AG04450 (cell line): ENCODE measurements at regions of chr14 and their contacts with region 1.

Region 1: DNA sequence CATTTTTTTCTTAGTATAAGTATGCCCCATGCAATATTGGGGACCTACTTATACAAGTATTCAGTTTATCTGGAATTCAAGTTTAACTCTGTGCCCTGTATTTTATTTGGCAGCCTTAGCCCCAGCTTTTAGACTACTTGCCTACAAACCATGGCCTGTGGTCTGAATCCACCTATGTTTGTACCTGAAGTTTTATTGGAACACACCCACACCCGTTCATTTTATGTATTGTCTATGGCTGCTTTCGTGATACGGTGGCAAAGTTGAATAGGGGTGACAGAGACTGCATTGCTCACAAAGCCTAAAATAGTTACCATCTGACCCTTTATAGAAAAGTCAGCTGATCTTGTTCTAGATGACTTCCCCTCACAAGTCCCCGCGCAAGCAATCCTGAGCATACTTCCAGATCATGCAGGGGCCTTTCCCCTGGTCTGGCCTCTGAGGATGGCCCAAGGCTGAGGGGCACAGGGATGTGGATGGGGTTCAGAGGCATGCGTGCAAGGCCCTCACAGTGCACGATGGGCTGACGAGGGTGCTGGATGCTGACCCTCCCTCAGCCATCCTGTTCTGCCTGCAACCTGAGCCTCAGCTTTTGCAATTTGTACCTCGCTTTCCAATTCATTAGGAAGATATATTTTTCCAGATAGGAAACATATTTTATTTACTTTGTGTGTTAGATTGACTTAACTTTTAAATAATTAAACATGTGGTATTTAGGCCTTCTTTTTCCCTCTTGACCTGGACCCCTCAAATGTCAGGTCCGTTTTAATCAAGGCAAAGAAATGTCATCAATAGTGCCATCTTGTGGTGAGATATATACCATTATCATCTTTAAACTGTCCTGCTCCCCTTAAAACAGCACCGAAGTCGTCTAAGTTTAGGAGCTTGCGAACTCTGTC is 527.3 kb upstream of the CCDC196 start:
- DNase-seq: no peak
- H3K4me3 ChIP-seq: no peak overlapping the region
- H3K27ac ChIP-seq: no peak overlapping the region
- H3K27me3 ChIP-seq: no peaks in the 10 kb centered on the region
- CTCF ChIP-seq: peak; percentile 41

Region 2: DNA sequence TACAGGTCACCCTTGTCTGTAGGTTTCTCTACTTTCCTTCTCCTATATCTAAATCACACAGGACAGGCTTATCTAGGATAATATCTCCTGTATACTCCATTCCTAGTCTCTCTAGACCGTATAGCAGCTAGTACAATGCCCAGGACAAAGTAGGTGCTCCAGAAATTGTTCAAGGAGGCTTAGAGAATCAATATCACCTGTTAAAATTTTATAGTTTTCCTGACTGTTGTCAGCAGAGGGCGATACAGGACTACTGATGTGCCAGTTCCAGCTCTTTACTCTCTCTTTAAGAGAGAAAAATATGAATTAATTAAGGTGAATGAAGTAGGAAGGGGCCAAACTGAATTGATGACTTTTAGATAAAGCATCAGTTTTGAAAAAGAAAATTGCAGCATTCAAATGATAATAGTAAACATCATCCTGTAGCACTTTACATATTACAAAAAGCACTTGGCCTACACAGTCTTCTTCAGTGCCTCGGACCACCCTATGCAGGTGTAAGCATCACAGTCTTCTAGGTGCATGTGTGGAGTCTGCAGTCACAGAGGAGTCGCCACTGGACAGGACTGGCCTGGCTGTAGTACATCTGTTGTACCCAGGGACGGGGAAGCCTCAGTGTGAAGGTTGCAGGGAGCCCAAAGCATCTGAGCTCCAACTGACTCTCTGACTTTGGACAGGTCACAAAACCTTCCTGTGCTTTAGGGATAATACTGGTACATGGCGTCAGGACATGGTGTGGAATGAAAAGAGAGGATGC is 794.7 kb before region 1 on chr14:
- CTCF ChIA-PET with region 1: interaction called, 53 read pairs
- POLR2A ChIA-PET with region 1: no interaction called
- DNase-seq: no peak
- H3K4me3 ChIP-seq: no peak overlapping the region
- H3K27ac ChIP-seq: no peak overlapping the region
- H3K27me3 ChIP-seq: no peaks in the 10 kb centered on the region
- CTCF ChIP-seq: peak; percentile 71

Region 3: GRCh38 chr14:65170768-65171507 is 788.0 kb before region 1 on chr14:
- CTCF ChIA-PET with region 1: interaction called, 21 read pairs
- POLR2A ChIA-PET with region 1: no interaction called
- DNase-seq: peak; percentile 36
- H3K4me3 ChIP-seq: peak overlapping the region; percentile 50
- H3K27ac ChIP-seq: peak overlapping the region; percentile 23
- H3K27me3 ChIP-seq: no peaks in the 10 kb centered on the region
- CTCF ChIP-seq: peak; percentile 58